ENCODE measurements at regions of chr11 and their contacts with region 1.

Region 1: GRCh38 chr11:60899046-60899936 is 7.1 kb downstream of the PRPF19 start:
- DNase-seq: peak; percentile 51
- CTCF ChIP-seq: peak; percentile 85

Region 2: DNA sequence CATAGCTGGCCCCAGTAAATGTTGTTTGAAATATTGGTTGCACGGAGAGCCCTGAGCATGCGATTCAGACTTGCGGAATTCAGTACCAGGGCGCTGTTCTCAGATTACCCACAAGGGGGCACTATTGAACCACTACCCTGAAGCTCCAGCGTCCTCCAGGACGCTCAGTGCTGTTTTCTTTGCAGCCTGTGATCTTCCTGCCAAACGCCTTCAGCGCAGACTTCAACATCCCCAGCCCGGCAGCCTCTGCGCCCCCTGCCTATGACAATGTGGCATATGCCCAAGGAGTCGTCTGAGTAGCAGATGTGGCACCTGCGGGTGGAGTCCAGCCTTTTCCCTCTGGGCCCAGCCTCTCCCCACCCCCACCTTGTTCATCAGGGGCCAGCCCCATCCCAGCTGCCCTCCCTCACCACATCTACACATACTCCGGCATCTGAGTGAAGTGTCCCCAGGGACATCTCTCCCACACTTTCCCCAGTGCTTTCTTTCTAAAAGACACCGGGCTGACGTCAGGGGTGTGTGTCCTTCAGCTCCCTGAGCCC is 123.8 kb before region 1 on chr11:
- in situ Hi-C with region 1: loop called (anchors 10 kb)
- DNase-seq: peak; percentile 88
- CTCF ChIP-seq: peak; percentile 70

Region 3: GRCh38 chr11:60831143-60831500 is 68.2 kb before region 1 on chr11:
- in situ Hi-C with region 1: loop called (anchors 10 kb)
- DNase-seq: peak; percentile 85
- CTCF ChIP-seq: peak; percentile 98

Region 4: GRCh38 chr11:61266602-61267001 is 367.3 kb after region 1 on chr11:
- in situ Hi-C with region 1: no loop called
- DNase-seq: no peak
- CTCF ChIP-seq: no peak

Measured in GM13976 (cell line).